ENCODE measurements at regions of chr2 and their contacts with region 1.

Region 1: DNA sequence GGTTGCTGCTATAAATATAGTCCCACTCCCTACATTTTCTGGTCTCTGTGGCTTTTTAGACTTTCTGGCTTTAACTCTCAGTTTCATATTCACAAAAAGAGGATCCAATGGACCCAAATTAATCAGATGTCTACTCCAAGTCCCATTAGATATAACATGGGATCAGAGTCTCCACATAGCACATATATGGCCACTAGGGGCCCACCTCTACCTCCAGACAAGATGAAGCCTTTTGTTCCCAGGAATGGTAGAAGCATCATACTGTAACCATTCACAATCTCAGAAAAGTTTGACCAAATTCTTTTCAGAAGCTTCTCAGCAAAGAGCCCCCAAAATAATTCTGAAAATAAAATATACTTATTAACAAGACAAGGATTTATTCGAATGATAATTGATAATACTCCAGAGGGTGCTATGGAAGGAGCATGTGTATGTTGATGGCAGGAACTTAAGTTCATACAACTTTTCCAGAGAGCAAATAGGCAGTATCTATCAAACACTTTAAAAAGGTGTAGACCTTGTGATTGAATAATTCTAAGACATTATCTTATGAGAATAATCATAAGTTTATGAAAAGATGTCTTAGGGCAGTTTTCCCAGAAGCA is 382.3 kb upstream of the CRIM1 start:
- DNase-seq: no peak
- ATAC-seq: peak; percentile 81
- H3K4me3 ChIP-seq: no peak overlapping the region
- H3K27ac ChIP-seq: no peak overlapping the region
- H3K4me1 ChIP-seq: no peaks in the 10 kb centered on the region
- H3K27me3 ChIP-seq: no peaks in the 10 kb centered on the region
- CTCF ChIP-seq: peak; percentile 28 to 70 (median 69); a peak in 5 of 6 replicates
- POLR2A ChIP-seq: no peak
- RAD21 ChIP-seq: peak; percentile 58

Region 2: DNA sequence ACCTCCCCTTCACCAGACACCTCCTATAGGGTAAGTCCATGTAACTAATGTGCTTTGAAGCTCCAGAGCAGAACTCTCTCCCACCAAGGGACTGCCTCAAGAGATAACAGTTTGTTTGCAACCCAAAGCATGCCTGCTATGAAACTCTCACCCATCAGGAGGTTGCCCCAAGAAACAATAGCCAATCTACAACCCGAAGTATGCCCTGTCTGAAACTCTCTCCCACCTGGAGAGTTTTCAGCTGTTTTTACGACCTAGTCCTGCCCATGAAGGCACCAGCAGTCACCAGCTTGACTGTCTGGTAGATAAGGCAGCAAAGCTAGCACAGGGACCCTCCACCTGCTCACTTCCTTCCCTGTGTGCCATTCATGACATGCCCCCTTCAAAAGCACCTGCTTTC is 151.6 kb before region 1 on chr2:
- CTCF ChIA-PET with region 1: no interaction called
- POLR2A ChIA-PET with region 1: no interaction called
- RAD21 ChIA-PET with region 1: no interaction called
- intact Hi-C with region 1: no loop called
- DNase-seq: no peak
- ATAC-seq: no peak
- H3K4me3 ChIP-seq: no peak overlapping the region
- H3K27ac ChIP-seq: no peak overlapping the region
- H3K4me1 ChIP-seq: no peaks in the 10 kb centered on the region
- H3K27me3 ChIP-seq: no peaks in the 10 kb centered on the region
- CTCF ChIP-seq: no peak
- POLR2A ChIP-seq: no peak
- RAD21 ChIP-seq: no peak

Region 3: GRCh38 chr2:36322108-36322507 is 348.9 kb after region 1 on chr2:
- CTCF ChIA-PET with region 1: no interaction called
- POLR2A ChIA-PET with region 1: no interaction called
- RAD21 ChIA-PET with region 1: no interaction called
- intact Hi-C with region 1: loop called (anchors 1 kb)
- DNase-seq: peak; percentile 19
- ATAC-seq: peak; percentile 77
- H3K4me3 ChIP-seq: no peak overlapping the region
- H3K27ac ChIP-seq: no peak overlapping the region
- H3K4me1 ChIP-seq: no peaks in the 10 kb centered on the region
- H3K27me3 ChIP-seq: no peaks in the 10 kb centered on the region
- CTCF ChIP-seq: peak; percentile 16 to 51 (median 44); a peak in 5 of 6 replicates
- POLR2A ChIP-seq: no peak
- RAD21 ChIP-seq: peak; percentile 48

Measured in HCT116 (cell line).